ENCODE measurements at regions of chr6 and their contacts with region 1.

Region 1: GRCh38 chr6:34196126-34196830 is 40.4 kb upstream of the HMGA1 start:
- DNase-seq: peak; percentile 80 to 87
- H3K4me3 ChIP-seq: peak overlapping the region; percentile 40 to 45
- H3K27ac ChIP-seq: peak overlapping the region in 1 of 2 donors; percentile 5
- H3K4me1 ChIP-seq: no peaks in the 10 kb centered on the region
- H3K27me3 ChIP-seq: no peaks in the 10 kb centered on the region
- CTCF ChIP-seq: peak; percentile 97 to 98 (median 98)
- POLR2A ChIP-seq: peak in 1 of 2 donors; percentile 30

Region 2: GRCh38 chr6:34094474-34095135 is 101.7 kb before region 1 on chr6:
- intact Hi-C with region 1: no loop called
- DNase-seq: no peak
- H3K4me3 ChIP-seq: no peak overlapping the region
- H3K27ac ChIP-seq: no peak overlapping the region
- H3K4me1 ChIP-seq: no peaks in the 10 kb centered on the region
- H3K27me3 ChIP-seq: peaks cover 0 to 3% of the 10 kb centered on the region in 2 donors
- CTCF ChIP-seq: no peak
- POLR2A ChIP-seq: no peak

Region 3: GRCh38 chr6:34414999-34415858 is 219.0 kb after region 1 on chr6:
- intact Hi-C with region 1: loop called (anchors 5 kb)
- DNase-seq: peak; percentile 42 to 63
- H3K4me3 ChIP-seq: no peak overlapping the region
- H3K27ac ChIP-seq: peak overlapping the region; percentile 67 to 78
- H3K4me1 ChIP-seq: peaks cover 0 to 6% of the 10 kb centered on the region in 2 donors
- H3K27me3 ChIP-seq: no peaks in the 10 kb centered on the region
- CTCF ChIP-seq: peak; percentile 60 to 89 (median 74)
- POLR2A ChIP-seq: no peak

Region 4: GRCh38 chr6:34610819-34611477 is 414.7 kb after region 1 on chr6:
- intact Hi-C with region 1: loop called (anchors 10 kb)
- DNase-seq: no peak
- H3K4me3 ChIP-seq: no peak overlapping the region
- H3K27ac ChIP-seq: peak overlapping the region; percentile 33 to 70
- H3K4me1 ChIP-seq: no peaks in the 10 kb centered on the region
- H3K27me3 ChIP-seq: no peaks in the 10 kb centered on the region
- CTCF ChIP-seq: no peak
- POLR2A ChIP-seq: no peak

Measured in uterus (tissue), 4 donors.